ENCODE measurements at regions of chr21 and their contacts with region 1.

Region 1: GRCh38 chr21:27339902-27340301 is 373.0 kb upstream of the ADAMTS5 start:
- DNase-seq: peak; percentile 50
- ATAC-seq: peak; percentile 63
- H3K4me3 ChIP-seq: no peak overlapping the region
- H3K27ac ChIP-seq: peak overlapping the region; percentile 47; the same call in 1 of the 2 replicates
- H3K4me1 ChIP-seq: 0 out of 2 replicates have a peak, but pooled peaks cover 3% of the 10 kb centered on the region
- H3K27me3 ChIP-seq: no peaks in the 10 kb centered on the region
- CTCF ChIP-seq: no peak
- POLR2A ChIP-seq: no peak
- RAD21 ChIP-seq: no peak

Region 2: GRCh38 chr21:27306791-27307775 is 32.8 kb before region 1 on chr21:
- CTCF ChIA-PET with region 1: no interaction called
- POLR2A ChIA-PET with region 1: no interaction called
- dilution Hi-C with region 1: no loop called
- in situ Hi-C with region 1: no loop called
- intact Hi-C with region 1: no loop called
- DNase-seq: peak; percentile 22
- ATAC-seq: peak; percentile 75
- H3K4me3 ChIP-seq: no peak overlapping the region
- H3K27ac ChIP-seq: peak overlapping the region; percentile 85; the same call in 1 of the 2 replicates
- H3K4me1 ChIP-seq: peaks cover 5% of the 10 kb centered on the region
- H3K27me3 ChIP-seq: no peaks in the 10 kb centered on the region
- CTCF ChIP-seq: no peak
- POLR2A ChIP-seq: no peak
- RAD21 ChIP-seq: no peak

Region 3: GRCh38 chr21:27380303-27380702 is 40.4 kb after region 1 on chr21:
- CTCF ChIA-PET with region 1: no interaction called
- POLR2A ChIA-PET with region 1: no interaction called
- dilution Hi-C with region 1: no loop called
- in situ Hi-C with region 1: no loop called
- intact Hi-C with region 1: loop called (anchors 1 kb)
- DNase-seq: no peak
- ATAC-seq: no peak
- H3K4me3 ChIP-seq: no peak overlapping the region
- H3K27ac ChIP-seq: no peak overlapping the region
- H3K4me1 ChIP-seq: no peaks in the 10 kb centered on the region
- H3K27me3 ChIP-seq: no peaks in the 10 kb centered on the region
- CTCF ChIP-seq: no peak
- POLR2A ChIP-seq: no peak
- RAD21 ChIP-seq: no peak